Activated B cell treated with CpG ODN at 0.5 μM for 24 hours (primary cell): ENCODE measurements at regions of chr2 and their contacts with region 1.

Region 1: DNA sequence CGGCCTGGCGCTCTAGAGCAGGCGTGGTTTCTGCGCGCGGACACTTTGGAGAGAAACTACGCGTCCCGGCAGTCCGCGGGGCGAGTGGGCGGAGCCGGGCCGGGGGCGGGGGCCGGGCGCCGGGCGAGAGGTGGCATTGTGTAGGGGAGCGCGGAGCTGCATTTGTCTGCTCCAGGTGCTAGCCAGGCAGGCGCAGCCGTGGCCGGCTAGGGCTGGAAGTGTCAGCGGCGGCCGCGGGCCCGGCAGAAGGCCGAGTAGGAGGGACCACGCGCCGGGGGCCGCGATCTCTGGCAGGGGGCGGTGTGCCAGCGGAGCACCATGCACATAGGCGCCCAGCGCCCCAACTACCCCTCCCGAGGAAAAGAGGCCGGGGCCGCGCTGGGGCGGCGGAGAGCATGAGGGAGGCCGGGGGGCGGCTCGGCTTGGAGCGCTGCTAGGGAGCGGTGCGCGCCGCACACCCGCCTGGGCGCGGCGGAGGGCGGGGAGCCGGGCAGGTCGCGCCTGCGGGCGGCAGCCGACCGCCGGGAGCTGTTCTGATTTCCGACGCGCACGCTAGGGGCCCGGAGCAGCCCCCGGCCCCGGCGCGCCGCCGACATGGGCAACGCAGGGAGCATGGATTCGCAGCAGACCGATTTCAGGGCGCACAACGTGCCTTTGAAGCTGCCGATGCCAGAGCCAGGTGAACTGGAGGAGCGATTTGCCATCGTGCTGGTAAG is at the start of gene FMNL2:
- DNase-seq: peak; percentile 73
- ATAC-seq: peak; percentile 88
- H3K4me3 Mint-ChIP-seq: peak within 1 kb of the TSS; percentile 85
- H3K27ac Mint-ChIP-seq: peak within 1 kb of the TSS; percentile 67
- H3K4me1 Mint-ChIP-seq: peaks cover 12% of the 10 kb centered on the region
- H3K27me3 Mint-ChIP-seq: peaks cover 5% of the 10 kb centered on the region
- CTCF ChIP-seq: no peak
- total RNA-seq, gene FMNL2: 2.8 and 4.0 TPM in 2 replicates

Region 2: GRCh38 chr2:151289369-151290088 is 1045.6 kb before region 1 on chr2 and contains the start of gene NMI:
- CTCF ChIA-PET with region 1: no interaction called
- POLR2A ChIA-PET with region 1: no interaction called
- intact Hi-C with region 1: loop called (anchors 10 kb)
- DNase-seq: peak; percentile 75
- ATAC-seq: peak; percentile 76
- H3K4me3 Mint-ChIP-seq: peak within 1 kb of the TSS; percentile 85
- H3K27ac Mint-ChIP-seq: peak within 1 kb of the TSS; percentile 94
- H3K4me1 Mint-ChIP-seq: peaks cover 44% of the 10 kb centered on the region
- H3K27me3 Mint-ChIP-seq: no peaks in the 10 kb centered on the region
- CTCF ChIP-seq: no peak
- total RNA-seq, gene NMI: 34.6 and 36.7 TPM in 2 replicates

Region 3: GRCh38 chr2:152466980-152467676 is 132.0 kb after region 1 on chr2:
- CTCF ChIA-PET with region 1: no interaction called
- POLR2A ChIA-PET with region 1: no interaction called
- intact Hi-C with region 1: loop called (anchors 1 kb)
- DNase-seq: no peak
- ATAC-seq: peak; percentile 75
- H3K4me3 Mint-ChIP-seq: peak overlapping the region; percentile 52
- H3K27ac Mint-ChIP-seq: peak overlapping the region; percentile 73
- H3K4me1 Mint-ChIP-seq: peaks cover 63% of the 10 kb centered on the region
- H3K27me3 Mint-ChIP-seq: no peaks in the 10 kb centered on the region
- CTCF ChIP-seq: no peak

Region 4: DNA sequence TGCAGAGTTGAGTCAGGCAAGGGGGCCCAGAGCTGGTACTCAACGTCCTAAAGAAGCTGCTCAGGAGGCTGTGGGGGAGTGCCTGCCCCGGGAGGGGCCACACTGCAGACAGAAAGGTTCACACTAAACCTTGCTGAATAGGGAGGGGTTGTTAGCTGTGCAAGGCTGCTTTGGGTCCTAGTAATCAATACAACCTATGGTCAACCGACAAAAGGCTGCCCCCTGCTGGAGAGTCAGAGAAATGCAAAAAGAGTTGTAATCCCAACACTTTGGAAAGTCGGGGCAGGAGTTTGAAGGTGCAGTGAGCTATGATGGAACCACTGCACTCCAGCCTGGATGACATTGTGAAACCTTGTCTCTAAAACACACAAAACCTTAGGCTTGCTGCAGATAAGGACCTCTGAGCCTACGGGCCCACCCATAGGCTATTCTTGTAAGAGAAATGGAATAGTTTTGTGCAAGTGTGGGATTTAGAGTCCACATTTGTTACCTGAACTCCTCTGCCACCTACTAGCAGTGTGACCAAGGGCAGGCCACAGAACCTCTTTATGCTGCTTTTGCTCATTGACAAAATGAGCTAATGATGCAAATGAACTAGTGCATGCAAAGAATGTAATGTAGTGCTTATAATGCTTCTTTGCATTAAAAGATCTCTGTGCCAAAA is 300.6 kb after region 1 on chr2:
- CTCF ChIA-PET with region 1: no interaction called
- POLR2A ChIA-PET with region 1: no interaction called
- intact Hi-C with region 1: loop called (anchors 1 kb)
- DNase-seq: peak; percentile 36
- ATAC-seq: peak; percentile 70
- H3K4me3 Mint-ChIP-seq: no peak overlapping the region
- H3K27ac Mint-ChIP-seq: no peak overlapping the region
- H3K4me1 Mint-ChIP-seq: no peaks in the 10 kb centered on the region
- H3K27me3 Mint-ChIP-seq: no peaks in the 10 kb centered on the region
- CTCF ChIP-seq: no peak